OCI-LY7 (cell line): ENCODE measurements at regions of chr11 and their contacts with region 1.

Region 1: DNA sequence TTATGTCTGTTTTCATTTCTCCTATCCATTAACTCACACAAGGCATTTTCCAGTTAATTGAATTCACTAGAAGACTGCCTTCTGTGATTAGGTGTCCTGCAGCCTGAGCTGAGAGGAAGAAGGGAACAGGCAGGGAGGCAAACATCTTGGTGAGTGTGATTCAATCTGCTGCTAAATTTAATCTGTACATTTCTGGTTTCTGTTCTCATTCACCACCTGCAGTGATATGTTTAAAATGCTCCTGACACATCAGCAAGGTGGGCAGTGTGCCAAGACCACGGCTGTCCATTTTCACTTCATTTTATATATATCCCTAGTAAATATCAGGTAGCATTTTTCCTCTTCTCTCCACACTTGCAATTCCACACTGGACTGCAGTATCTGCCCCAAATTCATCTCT is 416.5 kb downstream of the TMEM135 start:
- DNase-seq: peak; percentile 91
- H3K4me3 ChIP-seq: peak overlapping the region; percentile 55
- H3K27ac ChIP-seq: peak overlapping the region; percentile 96
- H3K4me1 ChIP-seq: peaks cover 82% of the 10 kb centered on the region
- CTCF ChIP-seq: no peak

Region 2: DNA sequence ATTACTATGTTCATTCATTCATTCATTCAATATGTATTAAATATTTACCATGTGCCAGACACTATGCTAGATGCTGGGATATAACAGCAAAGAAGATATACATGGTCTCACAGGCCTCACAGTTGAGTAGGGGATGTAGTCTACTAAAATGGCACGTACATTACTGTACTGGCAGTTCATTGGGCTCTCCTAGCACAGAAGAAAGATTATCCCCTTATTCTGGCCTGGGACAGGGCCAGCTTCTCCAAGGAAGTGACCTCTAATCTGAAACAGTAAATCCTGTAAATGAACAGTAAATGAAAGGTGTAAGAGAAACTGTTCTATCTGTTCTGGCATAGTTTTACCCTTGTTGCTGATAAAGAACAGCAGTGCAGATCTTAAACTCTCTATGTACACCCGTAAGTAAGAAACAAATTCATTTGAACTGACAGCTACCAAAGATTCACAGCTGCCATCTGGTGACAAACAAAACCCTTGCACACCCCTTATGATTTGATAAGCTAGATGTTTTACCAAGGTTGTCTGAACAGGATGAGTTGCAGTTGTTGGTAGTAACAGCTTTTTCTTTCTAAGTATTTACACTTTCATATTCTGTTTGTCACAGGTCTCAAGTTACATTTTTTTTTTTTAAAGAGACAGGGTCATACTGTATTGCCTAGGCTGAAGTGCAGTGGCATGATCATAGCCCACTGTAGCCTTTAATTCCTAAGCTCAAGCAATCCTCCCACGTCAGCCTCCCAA is 153.4 kb before region 1 on chr11:
- CTCF ChIA-PET with region 1: no interaction called
- POLR2A ChIA-PET with region 1: no interaction called
- intact Hi-C with region 1: loop called (anchors 2 kb)
- DNase-seq: peak; percentile 22
- H3K4me3 ChIP-seq: no peak overlapping the region
- H3K27ac ChIP-seq: peak overlapping the region; percentile 25
- H3K4me1 ChIP-seq: peaks cover 48% of the 10 kb centered on the region
- CTCF ChIP-seq: peak; percentile 31

Region 3: GRCh38 chr11:87359401-87359800 is 94.8 kb before region 1 on chr11:
- CTCF ChIA-PET with region 1: interaction called, 11 read pairs
- POLR2A ChIA-PET with region 1: interaction called, 15 read pairs
- intact Hi-C with region 1: loop called (anchors 1 kb)
- DNase-seq: peak; percentile 89
- H3K4me3 ChIP-seq: peak overlapping the region; percentile 65
- H3K27ac ChIP-seq: peak overlapping the region; percentile 92
- H3K4me1 ChIP-seq: peaks cover 95% of the 10 kb centered on the region
- CTCF ChIP-seq: no peak

Region 4: GRCh38 chr11:87421422-87421821 is 32.8 kb before region 1 on chr11:
- CTCF ChIA-PET with region 1: interaction called, 4 read pairs
- POLR2A ChIA-PET with region 1: interaction called, 4 read pairs
- intact Hi-C with region 1: loop called (anchors 2 kb)
- DNase-seq: peak; percentile 82
- H3K4me3 ChIP-seq: no peak overlapping the region
- H3K27ac ChIP-seq: no peak overlapping the region
- H3K4me1 ChIP-seq: peaks cover 33% of the 10 kb centered on the region
- CTCF ChIP-seq: peak; percentile 83